Adrenal gland (tissue), 19 donors: ENCODE measurements at regions of chr13 and their contacts with region 1.

Region 1: DNA sequence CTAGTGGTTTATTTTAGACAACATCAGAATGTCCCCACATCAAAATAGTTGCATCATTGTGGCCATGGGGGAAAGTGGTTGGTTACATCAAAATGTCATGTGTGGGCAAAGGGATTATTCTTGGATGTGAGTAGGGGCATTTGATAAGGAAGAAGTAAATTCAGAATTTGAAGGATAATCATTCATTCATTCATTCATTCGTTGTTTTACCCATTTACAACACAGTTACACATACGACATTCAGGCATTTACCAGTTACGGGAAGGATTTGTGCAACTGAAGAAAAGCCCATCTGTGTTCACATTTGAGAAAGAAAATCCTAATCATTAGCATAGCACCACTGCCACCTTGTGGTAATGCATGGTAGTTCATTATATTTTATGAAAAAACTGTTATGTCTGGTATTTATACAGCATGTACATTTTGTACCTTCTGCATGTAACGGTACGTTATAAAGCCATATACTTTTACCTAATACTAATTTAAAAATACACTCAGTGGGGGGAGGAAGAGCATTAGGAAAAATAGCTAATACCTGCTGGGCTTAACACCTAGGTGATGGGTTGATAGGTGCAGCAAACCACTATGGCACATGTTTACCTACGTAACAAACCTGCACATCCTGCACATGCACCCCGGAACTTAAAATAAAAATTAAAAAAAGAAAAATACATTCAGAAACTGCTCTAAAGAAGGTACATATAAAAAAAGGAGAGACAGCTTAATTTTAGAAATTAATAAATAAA is 62.1 kb downstream of the DGKH start:
- DNase-seq: peak in 4 of 7 donors; percentile 21 to 36 (median 30)
- H3K4me3 ChIP-seq: no peak overlapping the region
- H3K27ac ChIP-seq: no peak overlapping the region
- H3K4me1 ChIP-seq: no peaks in the 10 kb centered on the region
- H3K27me3 ChIP-seq: no peaks in the 10 kb centered on the region
- CTCF ChIP-seq: peak; percentile 81 to 93 (median 86)
- POLR2A ChIP-seq: no peak

Region 2: DNA sequence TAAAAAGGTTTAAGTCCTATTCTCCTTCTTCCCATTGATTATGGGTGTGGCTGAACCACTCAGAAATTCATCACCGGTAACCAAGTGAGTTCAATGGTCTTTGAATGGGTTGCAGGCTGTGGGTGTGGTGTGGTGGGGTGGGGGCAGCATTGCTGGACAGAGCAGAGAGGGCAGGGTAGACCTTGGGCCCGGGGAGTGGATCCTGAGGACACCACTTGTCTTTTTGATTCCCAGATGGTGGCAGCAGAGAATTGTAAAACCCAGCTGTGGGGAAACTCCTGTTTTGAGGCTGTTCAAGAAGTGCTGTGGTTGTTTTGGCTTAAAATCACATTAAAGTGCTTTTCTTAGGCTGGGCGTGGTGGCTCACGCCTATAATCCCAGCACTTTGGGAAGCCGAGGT is 699.1 kb before region 1 on chr13:
- intact Hi-C with region 1: loop called in 1 of 2 experiments (anchors 10 kb)
- DNase-seq: peak in 4 of 7 donors; percentile 18 to 56 (median 26)
- H3K4me3 ChIP-seq: no peak overlapping the region
- H3K27ac ChIP-seq: no peak overlapping the region
- H3K4me1 ChIP-seq: no peaks in the 10 kb centered on the region
- H3K27me3 ChIP-seq: no peaks in the 10 kb centered on the region
- CTCF ChIP-seq: peak in 3 of 6 experiments; percentile 28 to 39 (median 31)
- POLR2A ChIP-seq: no peak

Region 3: DNA sequence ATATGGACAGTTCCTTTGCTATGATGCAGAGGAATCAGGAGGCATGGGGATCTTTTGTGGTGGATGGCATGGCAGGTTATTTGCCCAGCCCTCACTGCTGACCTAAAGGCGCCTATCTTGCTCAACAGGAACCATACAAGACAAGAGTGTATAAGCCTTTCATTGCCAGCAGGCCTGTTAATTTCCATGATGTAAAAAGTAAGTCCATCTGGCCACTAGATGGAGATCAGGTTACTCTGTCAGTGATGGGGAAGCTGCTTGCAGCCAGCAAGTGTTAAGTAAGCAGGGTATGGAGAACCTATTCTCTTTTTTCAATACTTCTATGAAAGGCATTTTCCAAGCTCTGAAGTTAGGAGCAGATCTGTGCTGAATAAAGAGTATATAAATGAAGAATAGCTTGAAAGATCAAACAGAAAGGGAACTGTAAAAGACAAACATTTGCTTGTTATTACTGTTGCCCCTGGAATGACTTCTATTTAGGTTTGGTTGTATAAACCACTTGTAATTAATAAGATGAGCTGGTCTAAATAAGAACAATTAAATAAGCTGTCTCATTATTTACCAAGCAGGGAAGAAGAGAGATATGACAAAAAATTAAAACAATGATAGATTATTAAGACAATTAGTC is 442.3 kb before region 1 on chr13:
- intact Hi-C with region 1: loop called (anchors 5 to 10 kb)
- DNase-seq: peak; percentile 63 to 89 (median 77)
- H3K4me3 ChIP-seq: no peak overlapping the region
- H3K27ac ChIP-seq: no peak overlapping the region
- H3K4me1 ChIP-seq: peaks cover 0 to 3% of the 10 kb centered on the region in 2 donors
- H3K27me3 ChIP-seq: no peaks in the 10 kb centered on the region
- CTCF ChIP-seq: peak; percentile 50 to 99 (median 94)
- POLR2A ChIP-seq: no peak

Region 4: GRCh38 chr13:41942462-41943094 is 168.0 kb before region 1 on chr13:
- intact Hi-C with region 1: no loop called
- DNase-seq: peak in 2 of 7 donors; percentile 20 to 25
- H3K4me3 ChIP-seq: no peak overlapping the region
- H3K27ac ChIP-seq: no peak overlapping the region
- H3K4me1 ChIP-seq: peaks cover 4 to 18% of the 10 kb centered on the region in 2 donors
- H3K27me3 ChIP-seq: no peaks in the 10 kb centered on the region
- CTCF ChIP-seq: peak in 2 of 6 experiments; percentile 28
- POLR2A ChIP-seq: no peak

Region 5: GRCh38 chr13:42420304-42420703 is 309.7 kb after region 1 on chr13:
- intact Hi-C with region 1: no loop called
- DNase-seq: no peak
- H3K4me3 ChIP-seq: no peak overlapping the region
- H3K27ac ChIP-seq: no peak overlapping the region
- H3K4me1 ChIP-seq: no peaks in the 10 kb centered on the region
- H3K27me3 ChIP-seq: no peaks in the 10 kb centered on the region
- CTCF ChIP-seq: no peak
- POLR2A ChIP-seq: no peak